ENCODE measurements at regions of chr12 and their contacts with region 1.

Region 1: GRCh38 chr12:64610149-64610678 is at the start of gene RASSF3:
- DNase-seq: peak; percentile 76 to 90 (median 89)
- ATAC-seq: peak; percentile 87 to 92
- H3K4me3 ChIP-seq: peak within 1 kb of the TSS; percentile 91
- H3K27ac ChIP-seq: peak within 1 kb of the TSS; percentile 93
- H3K4me1 ChIP-seq: peaks cover 3% of the 10 kb centered on the region
- H3K27me3 ChIP-seq: no peaks in the 10 kb centered on the region
- total RNA-seq, gene RASSF3: 111 to 154 (median 122) TPM

Region 2: DNA sequence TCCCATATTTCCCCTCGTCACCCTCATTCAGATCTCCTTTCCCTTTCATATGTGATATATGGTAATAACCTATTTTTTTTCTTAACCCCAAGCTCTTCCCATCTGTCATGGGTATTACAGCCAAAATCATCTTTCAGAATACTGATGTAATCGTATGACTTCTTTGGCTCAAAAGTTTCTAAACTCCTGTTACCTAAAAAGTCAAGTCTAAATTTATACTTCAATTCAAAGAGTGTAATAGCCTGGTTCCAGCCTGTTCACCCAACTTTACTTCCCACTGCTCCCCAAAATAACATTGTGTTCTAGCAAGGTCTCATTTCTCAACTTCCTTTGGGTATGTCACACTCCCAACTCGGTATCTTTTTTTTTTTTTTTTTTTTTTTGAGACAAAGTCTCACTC is 109.8 kb before region 1 on chr12:
- intact Hi-C with region 1: no loop called
- DNase-seq: no peak
- ATAC-seq: no peak
- H3K4me3 ChIP-seq: no peak overlapping the region
- H3K27ac ChIP-seq: no peak overlapping the region
- H3K4me1 ChIP-seq: no peaks in the 10 kb centered on the region
- H3K27me3 ChIP-seq: no peaks in the 10 kb centered on the region

Region 3: DNA sequence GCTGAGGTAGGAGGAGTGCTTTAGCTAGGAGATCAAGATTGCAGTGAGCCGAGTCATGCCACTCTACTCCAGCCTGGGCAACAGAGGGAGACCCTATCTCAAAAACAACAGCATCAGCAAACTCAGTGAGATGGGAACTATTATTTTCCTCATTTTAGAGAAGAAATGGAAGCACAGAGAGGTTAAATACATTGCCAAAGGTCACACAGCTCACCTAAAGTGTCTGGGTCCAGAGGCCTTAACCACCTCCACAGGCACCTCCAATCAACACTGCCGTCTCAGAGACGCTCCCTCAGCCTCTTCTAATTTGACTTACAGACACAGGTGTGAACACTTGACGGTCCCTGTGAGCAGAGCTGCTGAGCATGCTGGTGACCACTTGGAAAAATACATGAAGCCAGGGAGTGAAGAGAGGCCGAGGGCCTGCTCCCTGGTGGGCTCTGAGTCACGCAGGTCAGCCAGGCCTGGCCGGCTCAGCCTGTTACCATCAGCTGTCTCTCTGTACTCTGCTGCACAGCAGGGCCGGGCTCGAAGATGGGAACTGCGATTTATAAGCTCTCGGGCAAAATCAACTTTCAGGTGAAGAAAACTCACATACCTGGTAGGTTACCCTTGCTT is 77.4 kb before region 1 on chr12:
- intact Hi-C with region 1: no loop called
- DNase-seq: no peak
- ATAC-seq: no peak
- H3K4me3 ChIP-seq: no peak overlapping the region
- H3K27ac ChIP-seq: no peak overlapping the region
- H3K4me1 ChIP-seq: no peaks in the 10 kb centered on the region
- H3K27me3 ChIP-seq: no peaks in the 10 kb centered on the region

Region 4: DNA sequence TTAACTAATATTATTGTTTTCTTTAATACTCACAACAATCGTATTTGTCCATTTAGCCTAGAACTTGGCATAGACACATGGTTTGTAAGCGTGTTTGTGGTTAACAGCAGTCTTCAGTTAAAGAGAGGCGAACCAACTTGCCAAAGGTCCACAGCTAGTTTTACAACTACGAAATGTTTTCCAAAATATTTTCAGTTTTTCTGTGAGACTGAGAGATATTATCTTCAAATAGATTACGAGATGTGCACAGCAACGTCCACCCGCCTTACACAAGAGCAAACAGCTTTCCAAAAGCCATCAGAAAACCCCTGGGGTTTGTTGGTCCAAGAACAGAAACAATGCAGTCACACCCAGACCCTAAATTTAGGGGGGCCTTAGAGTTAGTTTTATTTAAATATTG is 58.5 kb before region 1 on chr12:
- intact Hi-C with region 1: loop called in 2 of 4 experiments (anchors 10 kb)
- DNase-seq: no peak
- ATAC-seq: no peak
- H3K4me3 ChIP-seq: no peak overlapping the region
- H3K27ac ChIP-seq: no peak overlapping the region
- H3K4me1 ChIP-seq: no peaks in the 10 kb centered on the region
- H3K27me3 ChIP-seq: no peaks in the 10 kb centered on the region

Region 5: DNA sequence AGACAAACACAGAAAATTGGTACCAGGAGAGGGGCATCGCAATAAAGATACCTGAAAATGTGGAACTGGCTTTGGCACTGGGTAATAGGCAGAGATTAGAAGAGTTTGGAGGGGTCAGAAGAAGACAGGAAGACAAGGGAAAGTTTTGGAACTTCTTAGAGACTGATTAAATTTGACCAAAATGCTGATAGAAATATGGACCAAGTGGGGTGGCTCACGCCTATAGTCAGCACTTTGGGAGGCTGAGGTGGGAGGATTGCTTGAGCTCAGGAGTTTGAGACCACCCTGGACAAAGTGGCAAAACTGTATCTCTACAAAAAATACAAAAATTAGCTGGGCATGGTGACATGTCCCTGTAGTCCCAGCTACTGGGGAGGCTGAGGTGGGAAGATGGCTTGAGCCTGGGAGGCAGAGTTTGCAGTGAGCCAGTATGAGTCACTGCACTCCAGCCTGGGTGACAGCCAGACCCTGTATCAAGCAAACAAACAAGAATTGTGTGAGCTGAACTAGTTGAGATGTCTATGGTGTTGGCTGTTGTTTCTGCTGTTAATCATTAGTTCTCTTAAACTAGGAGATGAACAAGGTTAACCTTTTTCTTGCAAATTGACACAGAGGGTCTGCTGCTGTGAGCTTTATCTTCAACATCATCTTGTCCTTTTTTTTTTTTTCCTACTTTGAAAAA is 23.6 kb after region 1 on chr12:
- intact Hi-C with region 1: no loop called
- DNase-seq: peak; percentile 61 to 68 (median 64)
- ATAC-seq: peak; percentile 69 to 84
- H3K4me3 ChIP-seq: no peak overlapping the region
- H3K27ac ChIP-seq: no peak overlapping the region
- H3K4me1 ChIP-seq: peaks cover 10% of the 10 kb centered on the region
- H3K27me3 ChIP-seq: no peaks in the 10 kb centered on the region

Region 6: DNA sequence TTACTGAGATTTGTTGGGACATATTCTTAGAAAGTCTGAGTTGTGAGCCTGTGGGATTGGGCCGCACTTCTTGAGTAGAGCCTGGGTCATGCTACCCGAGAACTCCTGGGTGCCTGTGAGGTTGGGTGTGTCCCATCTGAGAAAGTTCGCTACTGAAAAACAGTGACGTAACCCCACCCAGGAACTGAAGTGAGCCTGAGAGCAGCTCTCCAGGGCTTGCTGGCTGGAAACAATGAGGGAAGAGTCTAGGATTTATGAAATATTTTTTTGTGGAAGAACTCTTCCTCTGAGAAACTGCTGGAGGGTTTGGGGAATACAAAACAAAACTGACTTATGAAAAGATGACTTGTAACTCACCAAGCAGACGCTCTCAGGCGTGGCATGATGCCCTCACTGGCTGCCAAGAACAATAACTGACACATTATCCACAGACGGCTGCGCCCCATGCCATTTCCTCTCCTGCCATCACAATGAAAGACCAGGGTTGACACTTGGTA is 69.3 kb after region 1 on chr12:
- intact Hi-C with region 1: loop called in 1 of 4 experiments (anchors 10 kb)
- DNase-seq: peak; percentile 82 to 93 (median 90)
- ATAC-seq: peak; percentile 63 to 65
- H3K4me3 ChIP-seq: no peak overlapping the region
- H3K27ac ChIP-seq: peak overlapping the region; percentile 93
- H3K4me1 ChIP-seq: peaks cover 11% of the 10 kb centered on the region
- H3K27me3 ChIP-seq: no peaks in the 10 kb centered on the region

Region 7: DNA sequence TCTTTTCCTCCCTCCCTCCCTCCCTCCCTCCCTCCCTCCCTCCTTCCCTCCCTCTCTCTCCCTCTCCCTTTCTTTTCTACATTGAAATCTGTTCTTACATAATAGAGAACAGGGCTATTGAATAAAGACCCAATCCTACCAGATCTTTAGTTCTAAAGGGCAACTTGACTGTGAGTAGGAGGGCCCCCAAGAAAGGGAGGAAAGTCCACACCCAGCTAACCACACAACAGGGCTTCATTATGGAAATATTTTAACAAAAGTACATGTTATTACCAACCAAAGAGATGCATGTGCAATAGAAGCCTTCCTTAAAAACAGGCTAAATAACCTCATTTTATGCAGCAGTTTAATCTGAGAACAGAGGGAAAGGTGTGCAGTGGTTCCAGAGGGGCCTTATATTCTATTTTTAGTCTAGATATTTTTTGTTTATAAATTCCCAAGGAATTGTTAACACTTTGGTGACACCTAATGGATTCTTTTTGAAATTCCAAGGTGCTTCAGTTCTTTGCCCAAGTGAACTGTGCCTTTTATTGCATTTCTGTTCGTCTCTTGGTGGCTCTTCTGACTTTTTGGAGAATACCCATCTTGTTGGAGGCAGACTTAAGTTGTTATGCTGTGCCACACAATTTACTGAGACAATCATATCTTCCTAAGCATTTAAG is 86.0 kb after region 1 on chr12:
- intact Hi-C with region 1: loop called in 3 of 4 experiments (anchors 5 kb)
- DNase-seq: no peak
- ATAC-seq: no peak
- H3K4me3 ChIP-seq: no peak overlapping the region
- H3K27ac ChIP-seq: no peak overlapping the region
- H3K4me1 ChIP-seq: no peaks in the 10 kb centered on the region
- H3K27me3 ChIP-seq: no peaks in the 10 kb centered on the region